Right cardiac atrium (tissue), 5 donors: ENCODE measurements at regions of chr3 and their contacts with region 1.

Region 1: GRCh38 chr3:149501524-149501923 is 27.0 kb downstream of the TM4SF4 start:
- DNase-seq: no peak
- ATAC-seq: no peak
- H3K4me3 ChIP-seq: no peak overlapping the region
- H3K27ac ChIP-seq: no peak overlapping the region
- H3K4me1 ChIP-seq: no peaks in the 10 kb centered on the region
- H3K27me3 ChIP-seq: no peaks in the 10 kb centered on the region

Region 2: GRCh38 chr3:149771652-149772271 is 270.2 kb after region 1 on chr3:
- intact Hi-C with region 1: loop called in 2 of 4 experiments (anchors 5 to 10 kb)
- DNase-seq: peak; percentile 30 to 59 (median 57)
- ATAC-seq: peak; percentile 38 to 75
- H3K4me3 ChIP-seq: no peak overlapping the region
- H3K27ac ChIP-seq: no peak overlapping the region
- H3K4me1 ChIP-seq: no peaks in the 10 kb centered on the region
- H3K27me3 ChIP-seq: no peaks in the 10 kb centered on the region